ENCODE measurements at regions of chr10 and their contacts with region 1.

Region 1: DNA sequence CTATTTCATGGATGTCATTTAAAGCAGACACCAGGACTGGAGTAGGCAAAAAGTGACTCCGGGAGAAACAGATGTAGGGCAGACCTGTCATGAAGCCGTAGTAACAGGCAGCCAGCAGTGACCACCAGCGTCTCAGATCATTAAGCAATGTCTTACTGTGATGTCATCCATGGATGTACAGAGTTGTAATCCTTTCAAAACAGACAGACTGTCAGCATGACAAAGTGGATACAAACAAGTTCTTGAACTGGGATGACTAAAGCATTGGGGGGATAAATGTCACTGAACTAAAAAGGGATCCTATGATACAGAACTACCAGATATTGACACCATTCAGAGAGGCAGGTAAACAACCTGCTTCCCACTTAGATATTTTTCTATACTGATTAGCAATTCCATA is 675.5 kb downstream of the PARD3 start:
- DNase-seq: no peak
- ATAC-seq: peak; percentile 34
- H3K4me3 ChIP-seq: no peak overlapping the region
- H3K27ac ChIP-seq: no peak overlapping the region
- H3K4me1 ChIP-seq: no peaks in the 10 kb centered on the region
- H3K27me3 ChIP-seq: no peaks in the 10 kb centered on the region
- CTCF ChIP-seq: no peak
- EP300 ChIP-seq: no peak
- POLR2A ChIP-seq: no peak
- RAD21 ChIP-seq: no peak

Region 2: GRCh38 chr10:34121781-34122628 is 17.6 kb before region 1 on chr10:
- CTCF ChIA-PET with region 1: interaction called, 9 read pairs
- POLR2A ChIA-PET with region 1: interaction called, 7 read pairs
- RAD21 ChIA-PET with region 1: interaction called, 20 read pairs
- SMC1A ChIA-PET with region 1: interaction called, 14 read pairs
- in situ Hi-C with region 1: no loop called
- intact Hi-C with region 1: no loop called
- DNase-seq: peak; percentile 20
- ATAC-seq: peak; percentile 65
- H3K4me3 ChIP-seq: no peak overlapping the region
- H3K27ac ChIP-seq: no peak overlapping the region
- H3K4me1 ChIP-seq: no peaks in the 10 kb centered on the region
- H3K27me3 ChIP-seq: no peaks in the 10 kb centered on the region
- CTCF ChIP-seq: no peak
- EP300 ChIP-seq: no peak
- POLR2A ChIP-seq: no peak
- RAD21 ChIP-seq: no peak